CD14-positive monocyte (primary cell): ENCODE measurements at regions of chr4 and their contacts with region 1.

Region 1: DNA sequence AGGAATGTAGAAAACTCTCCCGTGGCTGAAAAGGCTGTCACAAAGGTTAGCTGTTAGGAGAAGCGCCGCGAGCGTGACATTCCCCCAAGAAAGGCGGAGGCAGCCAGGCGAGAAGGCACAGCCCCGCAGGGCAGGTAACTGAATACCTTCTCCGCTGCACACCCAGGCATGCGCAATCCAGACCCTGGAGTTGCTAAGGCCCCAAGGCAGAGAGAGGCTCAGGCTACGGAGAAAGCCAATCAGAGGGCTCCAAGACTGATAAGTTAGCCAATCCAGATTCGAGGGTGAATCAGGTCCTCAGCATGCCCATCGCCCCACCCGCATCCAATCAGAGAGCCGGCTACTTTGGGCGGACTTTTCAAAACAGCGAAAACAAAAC is 485 bp upstream of the CCNG2 start:
- DNase-seq: peak; percentile 98 to 99 (median 99)
- H3K4me3 ChIP-seq: peak overlapping the region; percentile 66 to 100 (median 95)
- H3K4me3 Mint-ChIP-seq: peak overlapping the region; percentile 99
- H3K27ac ChIP-seq: peak overlapping the region; percentile 84 to 86
- H3K27ac Mint-ChIP-seq: peak overlapping the region; percentile 93 to 100 (median 99)
- H3K4me1 ChIP-seq: peaks cover 49 to 55% of the 10 kb centered on the region in 2 donors
- H3K4me1 Mint-ChIP-seq: peaks cover 50% of the 10 kb centered on the region
- H3K27me3 ChIP-seq: no peaks in the 10 kb centered on the region
- H3K27me3 Mint-ChIP-seq: no peaks in the 10 kb centered on the region
- CTCF ChIP-seq: no peak

Region 2: GRCh38 chr4:76213415-76214176 is 942.9 kb before region 1 on chr4 and contains the start of gene SCARB2:
- intact Hi-C with region 1: loop called in 1 of 2 experiments (anchors 10 kb)
- DNase-seq: peak; percentile 79 to 89 (median 82)
- H3K4me3 ChIP-seq: peak within 1 kb of the TSS; percentile 92 to 93 (median 92)
- H3K4me3 Mint-ChIP-seq: peak within 1 kb of the TSS; percentile 93 to 96
- H3K27ac ChIP-seq: peak within 1 kb of the TSS; percentile 91 to 98
- H3K27ac Mint-ChIP-seq: peak within 1 kb of the TSS; percentile 91 to 99 (median 97)
- H3K4me1 ChIP-seq: peaks cover 81 to 86% of the 10 kb centered on the region in 2 donors
- H3K4me1 Mint-ChIP-seq: peaks cover 89% of the 10 kb centered on the region
- H3K27me3 ChIP-seq: no peaks in the 10 kb centered on the region
- H3K27me3 Mint-ChIP-seq: peaks cover 0 to 3% (median 0%) of the 10 kb centered on the region in 3 donors
- CTCF ChIP-seq: no peak
- polyA plus RNA-seq, gene SCARB2: 36.8 to 73.0 (median 53.5) TPM

Region 3: DNA sequence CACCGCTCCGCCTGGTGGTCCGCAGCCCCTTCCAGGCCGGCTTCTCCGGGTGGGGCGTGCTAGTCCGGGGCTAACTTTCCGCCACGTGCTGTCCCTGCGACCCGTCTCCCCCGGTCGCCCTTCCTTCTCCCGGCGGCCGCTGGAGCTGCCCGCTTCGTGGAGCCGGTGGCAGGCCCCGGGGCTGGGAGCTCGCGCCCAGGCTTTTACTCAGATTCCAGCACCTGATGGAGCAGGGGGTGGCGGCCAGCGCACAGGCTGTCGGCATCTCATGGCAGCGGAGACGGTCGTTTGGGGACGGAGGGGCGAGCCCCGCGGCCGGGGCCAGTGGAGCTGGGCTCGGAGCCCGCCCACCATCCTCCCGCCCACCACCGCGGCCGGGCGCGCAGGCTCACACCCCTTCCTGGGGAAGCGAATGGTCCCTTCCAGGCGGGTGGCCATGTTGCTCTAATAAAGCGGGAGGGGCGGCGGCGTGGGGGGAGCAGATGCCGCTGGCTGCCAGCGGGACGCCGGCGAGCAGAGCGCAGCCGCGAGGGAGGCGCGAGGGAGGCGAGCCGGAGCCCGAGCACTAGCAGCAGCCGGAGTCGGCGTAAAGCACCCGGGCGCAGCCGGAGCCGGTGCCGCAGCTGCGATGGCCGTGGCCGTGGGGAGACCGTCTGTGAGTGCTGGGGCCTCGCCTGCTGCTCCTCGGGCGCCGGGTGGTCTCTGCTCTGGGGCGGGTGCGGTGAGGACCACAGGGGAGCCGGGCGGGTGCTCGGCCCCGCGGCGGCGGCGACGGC is 207.1 kb before region 1 on chr4 and contains the start of gene SEPTIN11:
- intact Hi-C with region 1: no loop called
- DNase-seq: peak; percentile 55 to 66 (median 55)
- H3K4me3 ChIP-seq: peak within 1 kb of the TSS; percentile 44 to 85 (median 74)
- H3K4me3 Mint-ChIP-seq: peak within 1 kb of the TSS; percentile 87 to 95
- H3K27ac ChIP-seq: no peak within 1 kb of the TSS
- H3K27ac Mint-ChIP-seq: peak within 1 kb of the TSS in 3 of 7 donors; percentile 24 to 76 (median 63)
- H3K4me1 ChIP-seq: peaks cover 20 to 35% of the 10 kb centered on the region in 2 donors
- H3K4me1 Mint-ChIP-seq: peaks cover 21% of the 10 kb centered on the region
- H3K27me3 ChIP-seq: peaks cover 0 to 24% of the 10 kb centered on the region in 2 donors
- H3K27me3 Mint-ChIP-seq: peaks cover 13 to 40% (median 21%) of the 10 kb centered on the region in 3 donors
- CTCF ChIP-seq: no peak
- polyA plus RNA-seq, gene SEPTIN11: 3.2 to 14.8 (median 8.8) TPM

Region 4: DNA sequence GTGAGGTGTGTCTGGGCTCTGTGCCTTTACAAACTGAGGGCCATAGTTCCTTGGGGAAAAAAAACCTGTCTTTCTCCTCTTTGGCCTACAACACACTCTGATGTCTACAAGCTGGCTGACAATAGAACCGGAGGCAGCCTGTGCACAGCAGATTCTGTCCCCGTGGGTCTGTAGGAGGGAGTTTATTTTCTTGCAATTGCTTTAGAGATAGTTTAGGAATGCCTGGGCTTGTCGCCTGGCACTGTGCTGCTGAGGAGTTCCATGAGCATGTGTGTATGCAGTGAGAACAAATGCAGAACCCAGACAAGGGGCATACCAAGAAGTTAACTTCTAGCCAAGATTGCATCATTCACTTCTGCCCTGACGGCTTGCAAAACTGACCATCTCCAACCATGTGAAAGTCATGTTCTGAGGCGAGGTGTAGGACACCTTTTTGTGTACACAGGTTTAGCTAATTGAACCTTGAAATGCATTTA is 134.9 kb before region 1 on chr4:
- intact Hi-C with region 1: no loop called
- DNase-seq: peak in 2 of 3 donors; percentile 7 to 9
- H3K4me3 ChIP-seq: no peak overlapping the region
- H3K4me3 Mint-ChIP-seq: no peak overlapping the region
- H3K27ac ChIP-seq: no peak overlapping the region
- H3K27ac Mint-ChIP-seq: peak overlapping the region in 2 of 7 donors; percentile 11 to 26
- H3K4me1 ChIP-seq: no peaks in the 10 kb centered on the region
- H3K4me1 Mint-ChIP-seq: peaks cover 7% of the 10 kb centered on the region
- H3K27me3 ChIP-seq: no peaks in the 10 kb centered on the region
- H3K27me3 Mint-ChIP-seq: no peaks in the 10 kb centered on the region
- CTCF ChIP-seq: no peak

Region 5: GRCh38 chr4:77075869-77076799 is 80.4 kb before region 1 on chr4 and contains the start of gene CCNI:
- intact Hi-C with region 1: loop called (anchors 2 to 5 kb)
- DNase-seq: peak; percentile 94 to 97 (median 97)
- H3K4me3 ChIP-seq: peak within 1 kb of the TSS; percentile 81 to 96 (median 84)
- H3K4me3 Mint-ChIP-seq: peak within 1 kb of the TSS in 1 of 2 donors; percentile 87
- H3K27ac ChIP-seq: peak within 1 kb of the TSS; percentile 97 to 99
- H3K27ac Mint-ChIP-seq: peak within 1 kb of the TSS in 6 of 7 donors; percentile 100
- H3K4me1 ChIP-seq: peaks cover 35 to 46% of the 10 kb centered on the region in 2 donors
- H3K4me1 Mint-ChIP-seq: peaks cover 33% of the 10 kb centered on the region
- H3K27me3 ChIP-seq: no peaks in the 10 kb centered on the region
- H3K27me3 Mint-ChIP-seq: no peaks in the 10 kb centered on the region
- CTCF ChIP-seq: no peak
- polyA plus RNA-seq, gene CCNI: 106 to 264 (median 171) TPM

Region 6: GRCh38 chr4:77095101-77095821 is 61.3 kb before region 1 on chr4:
- intact Hi-C with region 1: loop called (anchors 1 to 5 kb)
- DNase-seq: peak; percentile 56 to 80 (median 72)
- H3K4me3 ChIP-seq: no peak overlapping the region
- H3K4me3 Mint-ChIP-seq: no peak overlapping the region
- H3K27ac ChIP-seq: no peak overlapping the region
- H3K27ac Mint-ChIP-seq: no peak overlapping the region
- H3K4me1 ChIP-seq: peaks cover 16 to 20% of the 10 kb centered on the region in 2 donors
- H3K4me1 Mint-ChIP-seq: peaks cover 33% of the 10 kb centered on the region
- H3K27me3 ChIP-seq: no peaks in the 10 kb centered on the region
- H3K27me3 Mint-ChIP-seq: peaks cover 0 to 5% (median 0%) of the 10 kb centered on the region in 3 donors
- CTCF ChIP-seq: peak; percentile 95

Region 7: DNA sequence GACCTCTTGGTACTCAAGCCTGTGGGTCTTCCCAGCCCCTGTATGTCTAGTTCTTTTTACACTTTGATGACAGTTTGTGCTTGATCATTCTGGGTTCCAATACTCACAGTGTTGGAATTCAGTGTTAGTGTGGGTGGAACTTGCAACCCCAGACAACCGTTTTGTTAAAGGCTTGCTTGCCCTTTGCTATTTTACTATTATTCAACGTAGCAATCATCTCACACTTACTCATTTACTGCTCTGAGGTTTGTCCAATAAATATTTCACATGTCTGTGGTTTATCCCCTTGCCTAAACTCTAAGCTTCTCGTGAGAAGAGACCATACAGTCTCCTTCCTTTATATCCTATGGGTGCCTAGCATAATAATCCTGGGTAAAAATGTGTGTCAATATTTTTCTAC is 15.8 kb after region 1 on chr4:
- intact Hi-C with region 1: no loop called
- DNase-seq: no peak
- H3K4me3 ChIP-seq: no peak overlapping the region
- H3K4me3 Mint-ChIP-seq: no peak overlapping the region
- H3K27ac ChIP-seq: no peak overlapping the region
- H3K27ac Mint-ChIP-seq: no peak overlapping the region
- H3K4me1 ChIP-seq: no peaks in the 10 kb centered on the region
- H3K4me1 Mint-ChIP-seq: no peaks in the 10 kb centered on the region
- H3K27me3 ChIP-seq: no peaks in the 10 kb centered on the region
- H3K27me3 Mint-ChIP-seq: peaks cover 0 to 3% (median 0%) of the 10 kb centered on the region in 3 donors
- CTCF ChIP-seq: no peak

Region 8: GRCh38 chr4:77193511-77194102 is 37.1 kb after region 1 on chr4:
- intact Hi-C with region 1: loop called in 1 of 2 experiments (anchors 5 kb)
- DNase-seq: peak; percentile 62 to 81 (median 75)
- H3K4me3 ChIP-seq: peak overlapping the region; percentile 59 to 79 (median 78)
- H3K4me3 Mint-ChIP-seq: peak overlapping the region; percentile 99
- H3K27ac ChIP-seq: peak overlapping the region; percentile 79 to 80
- H3K27ac Mint-ChIP-seq: peak overlapping the region; percentile 94 to 99 (median 98)
- H3K4me1 ChIP-seq: peaks cover 20% of the 10 kb centered on the region in 2 donors
- H3K4me1 Mint-ChIP-seq: peaks cover 31% of the 10 kb centered on the region
- H3K27me3 ChIP-seq: no peaks in the 10 kb centered on the region
- H3K27me3 Mint-ChIP-seq: peaks cover 0 to 3% (median 2%) of the 10 kb centered on the region in 3 donors
- CTCF ChIP-seq: no peak

Region 9: GRCh38 chr4:77293436-77293835 is 136.9 kb after region 1 on chr4:
- intact Hi-C with region 1: no loop called
- DNase-seq: no peak
- H3K4me3 ChIP-seq: no peak overlapping the region
- H3K4me3 Mint-ChIP-seq: no peak overlapping the region
- H3K27ac ChIP-seq: no peak overlapping the region
- H3K27ac Mint-ChIP-seq: no peak overlapping the region
- H3K4me1 ChIP-seq: no peaks in the 10 kb centered on the region
- H3K4me1 Mint-ChIP-seq: no peaks in the 10 kb centered on the region
- H3K27me3 ChIP-seq: no peaks in the 10 kb centered on the region
- H3K27me3 Mint-ChIP-seq: peaks cover 0 to 2% (median under 1%) of the 10 kb centered on the region in 3 donors
- CTCF ChIP-seq: no peak